ENCODE measurements at regions of chr17 and their contacts with region 1.

Region 1: DNA sequence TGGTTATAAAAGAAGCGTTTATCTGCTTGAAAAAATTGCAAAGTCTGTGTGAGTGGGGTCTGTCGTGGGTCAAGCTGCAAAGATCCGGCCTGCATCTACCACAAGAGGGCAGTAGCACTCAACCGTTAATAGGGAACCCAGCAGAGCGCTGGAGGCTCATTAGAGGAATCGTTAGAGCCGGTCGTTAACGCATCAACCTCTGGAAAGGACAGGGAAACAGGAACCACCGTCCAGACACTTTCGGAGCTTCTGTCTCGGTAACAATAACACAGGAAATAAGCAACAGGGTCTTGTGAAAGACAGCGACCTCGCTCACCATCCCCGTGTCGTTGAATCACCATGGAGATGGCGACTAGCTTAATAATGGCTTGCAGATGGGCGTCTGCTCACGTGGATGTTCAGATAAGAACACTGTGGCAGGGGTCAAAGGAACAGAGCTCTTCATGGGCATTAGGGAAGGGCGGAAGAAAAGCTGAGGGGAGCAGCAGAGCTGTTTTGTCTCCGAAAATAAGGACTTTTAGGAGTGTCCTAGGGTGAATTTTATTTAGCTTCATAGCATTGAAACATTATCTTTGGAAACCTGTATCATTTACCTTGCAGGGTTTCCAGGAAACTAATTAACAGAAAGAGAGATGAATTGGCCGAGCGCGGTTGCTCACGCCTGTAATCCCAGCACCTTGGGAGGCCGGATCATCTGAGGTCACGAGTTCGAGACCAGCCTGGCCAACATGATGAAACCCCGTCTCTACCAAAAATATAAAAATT is 11.9 kb upstream of the NSRP1 start:
- DNase-seq: peak; percentile 85
- H3K4me3 ChIP-seq: peak overlapping the region; percentile 26
- H3K27ac ChIP-seq: peak overlapping the region; percentile 41
- H3K4me1 ChIP-seq: no peaks in the 10 kb centered on the region
- H3K27me3 ChIP-seq: no peaks in the 10 kb centered on the region
- CTCF ChIP-seq: peak; percentile 82

Region 2: DNA sequence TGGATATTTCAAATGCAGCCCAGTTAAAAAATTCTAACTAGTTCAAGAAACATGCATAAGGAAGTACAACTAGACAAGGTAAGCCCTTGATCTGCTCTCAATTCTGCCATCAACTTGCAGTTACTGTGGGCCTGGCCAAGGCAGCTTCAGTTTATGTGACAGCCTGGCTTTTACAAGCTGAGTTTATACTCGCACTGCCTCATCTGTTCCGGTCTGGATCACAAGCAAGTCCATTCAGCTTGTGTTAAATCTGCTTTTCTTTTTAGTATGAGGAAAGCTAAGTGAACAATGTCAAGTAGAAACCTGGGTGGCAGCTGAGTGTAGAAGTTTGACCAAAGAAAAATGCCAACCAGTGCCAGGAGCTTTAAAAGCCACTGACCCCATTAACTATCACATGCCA is 405.5 kb before region 1 on chr17:
- intact Hi-C with region 1: no loop called
- DNase-seq: no peak
- H3K4me3 ChIP-seq: no peak overlapping the region
- H3K27ac ChIP-seq: peak overlapping the region; percentile 20
- H3K4me1 ChIP-seq: no peaks in the 10 kb centered on the region
- H3K27me3 ChIP-seq: no peaks in the 10 kb centered on the region
- CTCF ChIP-seq: no peak

Region 3: DNA sequence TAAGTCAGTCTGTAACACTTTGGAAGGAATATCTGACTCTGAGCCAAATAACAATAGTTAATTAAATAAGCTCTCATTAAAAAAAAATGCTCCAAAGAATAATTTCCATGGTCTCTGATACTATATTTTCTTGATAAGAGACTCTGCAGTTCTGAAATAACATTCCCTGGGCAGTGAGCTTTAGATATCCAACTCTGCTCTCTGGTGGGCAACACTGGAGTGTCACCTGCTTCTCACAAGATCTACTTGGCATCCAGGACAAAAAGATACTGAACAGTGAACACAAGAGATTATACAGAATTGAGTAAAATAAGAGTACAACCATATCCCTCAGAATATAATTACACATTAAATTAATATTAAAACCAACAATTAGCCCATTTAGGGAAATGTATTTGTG is 173.3 kb after region 1 on chr17:
- intact Hi-C with region 1: loop called (anchors 10 kb)
- DNase-seq: no peak
- H3K4me3 ChIP-seq: no peak overlapping the region
- H3K27ac ChIP-seq: no peak overlapping the region
- H3K4me1 ChIP-seq: no peaks in the 10 kb centered on the region
- H3K27me3 ChIP-seq: no peaks in the 10 kb centered on the region
- CTCF ChIP-seq: no peak

Region 4: GRCh38 chr17:30716461-30717300 is 611.9 kb after region 1 on chr17:
- intact Hi-C with region 1: no loop called
- DNase-seq: no peak
- H3K4me3 ChIP-seq: no peak overlapping the region
- H3K27ac ChIP-seq: no peak overlapping the region
- H3K4me1 ChIP-seq: no peaks in the 10 kb centered on the region
- H3K27me3 ChIP-seq: no peaks in the 10 kb centered on the region
- CTCF ChIP-seq: no peak